ENCODE measurements at regions of chr9 and their contacts with region 1.

Region 1: GRCh38 chr9:19464764-19465585 is 56.2 kb downstream of the ACER2 start:
- DNase-seq: peak; percentile 66
- H3K4me3 Mint-ChIP-seq: peak overlapping the region; percentile 72
- H3K27ac Mint-ChIP-seq: no peak overlapping the region
- H3K4me1 Mint-ChIP-seq: peaks cover 8% of the 10 kb centered on the region
- H3K27me3 Mint-ChIP-seq: peaks cover 2% of the 10 kb centered on the region
- CTCF ChIP-seq: peak; percentile 80

Region 2: DNA sequence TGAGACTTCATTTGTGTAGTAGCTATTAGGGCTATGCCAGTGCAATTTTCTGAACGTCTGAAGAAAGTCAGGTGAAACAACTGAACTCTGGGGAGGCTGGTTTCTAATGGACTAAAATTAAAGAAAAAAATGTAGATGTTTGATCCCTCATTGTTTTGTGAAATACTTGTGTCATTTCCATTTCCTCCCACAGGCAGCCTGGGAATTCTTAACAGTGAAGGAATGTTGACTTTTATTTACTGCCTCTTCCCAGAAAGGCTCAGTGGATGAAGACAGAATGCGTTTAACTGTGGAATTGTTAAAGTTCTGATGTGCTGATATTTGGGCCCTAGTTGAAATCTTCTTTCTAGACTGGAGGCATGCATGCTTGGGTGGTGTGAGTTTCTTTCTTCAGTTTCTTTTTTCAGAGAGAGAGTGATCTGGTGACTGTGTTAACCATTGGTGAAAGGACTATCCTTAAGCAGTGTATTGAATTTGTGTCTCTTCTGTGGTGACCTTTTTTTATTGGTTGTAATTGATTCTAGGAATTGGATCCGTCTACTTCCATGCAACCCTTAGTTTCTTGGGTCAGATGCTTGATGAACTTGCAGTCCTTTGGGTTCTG is 40.7 kb before region 1 on chr9:
- CTCF ChIA-PET with region 1: interaction called, 14 read pairs
- POLR2A ChIA-PET with region 1: no interaction called
- intact Hi-C with region 1: no loop called
- DNase-seq: no peak
- H3K4me3 Mint-ChIP-seq: no peak overlapping the region
- H3K27ac Mint-ChIP-seq: no peak overlapping the region
- H3K4me1 Mint-ChIP-seq: no peaks in the 10 kb centered on the region
- H3K27me3 Mint-ChIP-seq: no peaks in the 10 kb centered on the region
- CTCF ChIP-seq: no peak

Region 3: DNA sequence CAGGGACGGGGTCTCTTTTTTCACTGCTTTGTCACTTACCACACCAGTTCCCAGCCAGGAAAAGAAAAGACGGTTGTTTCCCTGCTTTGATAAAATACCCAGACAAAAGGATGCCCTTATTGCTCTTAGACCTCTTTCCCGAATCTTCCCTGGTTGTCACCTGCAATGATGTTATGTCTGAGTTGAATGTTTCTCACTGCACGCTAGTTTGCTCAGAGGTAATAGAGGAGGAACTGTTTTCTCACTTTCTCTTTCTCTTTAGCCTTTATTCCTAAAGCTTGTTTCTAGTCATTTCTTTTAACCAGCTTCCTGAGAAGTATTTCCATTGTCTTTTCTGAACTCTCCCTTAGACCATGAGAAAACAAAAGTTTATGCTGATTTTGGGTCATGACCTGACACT is 23.2 kb before region 1 on chr9:
- CTCF ChIA-PET with region 1: interaction called, 11 read pairs
- POLR2A ChIA-PET with region 1: no interaction called
- intact Hi-C with region 1: no loop called
- DNase-seq: no peak
- H3K4me3 Mint-ChIP-seq: no peak overlapping the region
- H3K27ac Mint-ChIP-seq: no peak overlapping the region
- H3K4me1 Mint-ChIP-seq: no peaks in the 10 kb centered on the region
- H3K27me3 Mint-ChIP-seq: no peaks in the 10 kb centered on the region
- CTCF ChIP-seq: no peak

Region 4: DNA sequence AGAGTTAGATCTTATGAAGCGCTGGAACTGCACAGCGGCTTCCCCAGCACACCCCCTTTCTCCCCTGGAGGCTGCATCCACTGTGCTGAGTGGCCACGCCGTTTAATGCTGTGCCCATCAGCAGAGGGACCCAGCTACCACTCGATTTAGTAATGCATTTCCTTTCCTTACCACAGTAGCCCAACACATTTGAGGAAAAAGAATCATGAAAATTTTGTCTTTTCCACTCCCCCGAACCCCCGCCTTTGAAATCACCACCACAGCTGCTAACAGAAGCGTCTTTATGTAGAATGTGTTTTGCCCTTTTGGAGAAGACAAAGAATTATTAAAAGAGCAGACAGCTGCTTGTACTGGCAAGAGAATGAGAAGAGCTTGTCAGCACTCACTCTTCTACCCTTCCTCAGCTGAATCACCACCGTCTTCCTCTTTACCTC is 17.0 kb after region 1 on chr9:
- CTCF ChIA-PET with region 1: interaction called, 61 read pairs
- POLR2A ChIA-PET with region 1: no interaction called
- intact Hi-C with region 1: no loop called
- DNase-seq: no peak
- H3K4me3 Mint-ChIP-seq: no peak overlapping the region
- H3K27ac Mint-ChIP-seq: no peak overlapping the region
- H3K4me1 Mint-ChIP-seq: peaks cover 9% of the 10 kb centered on the region
- H3K27me3 Mint-ChIP-seq: peaks cover 25% of the 10 kb centered on the region
- CTCF ChIP-seq: no peak

Region 5: DNA sequence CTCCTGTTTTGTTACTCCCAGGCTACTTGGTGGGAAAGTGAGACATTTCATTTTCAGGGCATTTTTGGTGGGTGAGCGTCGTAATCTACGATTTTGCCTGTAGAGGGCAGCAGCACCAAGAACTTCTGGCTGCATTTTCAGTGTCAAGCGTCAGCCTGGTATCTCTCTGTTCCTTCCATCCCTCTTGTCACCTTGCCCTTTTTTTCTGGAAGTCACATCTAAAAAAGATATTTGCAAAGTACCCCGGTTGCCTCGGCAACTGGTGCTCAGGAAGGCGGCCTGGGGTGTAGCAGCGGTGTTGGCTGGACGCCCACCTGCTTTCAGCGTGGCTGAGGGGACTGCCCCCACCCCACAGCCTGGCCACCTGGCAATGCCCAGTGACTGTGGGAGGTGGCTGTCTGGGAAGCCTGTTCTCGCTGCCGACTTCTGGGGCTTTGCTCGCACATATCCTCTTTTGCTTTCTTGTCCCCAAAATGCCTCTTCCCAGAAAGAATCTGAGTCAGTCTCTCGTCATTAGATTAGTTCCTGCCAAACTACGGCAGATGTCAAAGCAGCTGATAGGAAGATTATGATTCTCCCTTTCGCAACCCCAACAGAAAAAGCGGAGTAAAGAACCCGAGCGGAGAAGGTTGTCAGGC is 28.3 kb after region 1 on chr9:
- CTCF ChIA-PET with region 1: interaction called, 14 read pairs
- POLR2A ChIA-PET with region 1: no interaction called
- intact Hi-C with region 1: no loop called
- DNase-seq: peak; percentile 67
- H3K4me3 Mint-ChIP-seq: peak overlapping the region; percentile 72
- H3K27ac Mint-ChIP-seq: no peak overlapping the region
- H3K4me1 Mint-ChIP-seq: peaks cover 16% of the 10 kb centered on the region
- H3K27me3 Mint-ChIP-seq: peaks cover 19% of the 10 kb centered on the region
- CTCF ChIP-seq: peak; percentile 81

Measured in MCF 10A (cell line).